ENCODE measurements at regions of chr7 and their contacts with region 1.

Region 1: GRCh38 chr7:41222696-41223095 is 480.2 kb downstream of the INHBA start:
- DNase-seq: peak; percentile 19
- H3K4me3 ChIP-seq: no peak overlapping the region
- H3K27me3 ChIP-seq: no peaks in the 10 kb centered on the region
- CTCF ChIP-seq: no peak

Region 2: GRCh38 chr7:40907286-40907685 is 315.4 kb before region 1 on chr7:
- CTCF ChIA-PET with region 1: no interaction called
- POLR2A ChIA-PET with region 1: interaction called, 15 read pairs
- DNase-seq: no peak
- H3K4me3 ChIP-seq: no peak overlapping the region
- H3K27me3 ChIP-seq: no peaks in the 10 kb centered on the region
- CTCF ChIP-seq: no peak